Astrocyte of the cerebellum (primary cell): ENCODE measurements at regions of chr3 and their contacts with region 1.

Region 1: GRCh38 chr3:64559588-64559987 is 128.2 kb downstream of the ADAMTS9 start:
- DNase-seq: no peak
- H3K4me3 ChIP-seq: no peak overlapping the region
- CTCF ChIP-seq: no peak

Region 2: DNA sequence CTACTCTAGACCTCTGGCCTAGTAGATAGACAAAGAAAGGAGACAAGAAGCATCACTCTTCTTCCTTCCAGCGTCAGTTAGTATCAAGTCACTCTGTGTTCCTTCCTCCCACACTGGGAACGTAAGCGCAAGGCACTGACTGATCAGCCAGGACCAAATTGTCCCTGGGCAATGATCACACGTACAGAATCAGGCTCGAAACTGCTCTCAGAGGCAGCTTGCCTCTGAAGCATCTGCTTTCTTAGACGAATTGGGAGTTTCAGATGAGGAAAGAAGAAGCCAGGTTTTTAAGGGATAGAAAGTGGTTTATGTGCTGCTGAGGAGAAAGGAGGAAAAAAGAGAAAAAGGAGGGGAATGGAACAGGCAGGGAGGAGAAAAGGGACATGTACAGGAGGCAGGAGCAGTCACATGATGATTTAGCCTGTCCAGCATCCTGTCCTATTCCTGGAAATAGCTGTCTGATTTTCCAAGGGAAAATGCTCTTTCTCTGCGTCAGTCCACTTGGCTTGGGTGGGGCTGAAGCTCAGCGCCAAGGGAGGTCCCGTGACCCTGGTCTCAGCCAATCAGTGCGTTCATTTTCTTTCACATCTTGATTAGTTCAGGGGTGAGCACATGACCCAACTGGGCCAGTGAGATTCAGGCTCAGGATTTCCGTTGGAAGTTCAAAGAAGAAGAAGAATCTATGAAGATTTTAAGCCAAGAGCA is 232.3 kb before region 1 on chr3:
- in situ Hi-C with region 1: no loop called
- DNase-seq: no peak
- H3K4me3 ChIP-seq: no peak overlapping the region
- CTCF ChIP-seq: no peak

Region 3: DNA sequence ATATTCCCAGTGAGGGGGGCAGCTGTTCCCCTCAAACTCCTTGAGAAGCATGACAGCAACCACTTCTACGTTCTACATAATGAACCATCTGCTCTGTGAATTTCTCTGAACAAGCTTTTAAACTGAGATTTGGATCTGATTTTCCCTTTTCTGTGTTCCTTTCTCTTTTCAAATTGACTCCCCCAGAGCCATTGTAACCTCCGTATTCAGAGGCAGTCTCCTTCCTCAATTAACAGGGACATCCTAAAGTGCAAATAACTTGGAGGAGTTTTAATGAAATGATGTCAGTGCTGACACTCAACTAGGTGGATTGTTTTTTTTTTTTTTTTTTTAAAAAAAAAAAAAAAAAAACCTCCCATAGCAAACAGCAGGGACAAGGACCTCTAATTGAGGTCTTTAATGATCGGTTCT is 79.4 kb after region 1 on chr3:
- in situ Hi-C with region 1: loop called (anchors 5 kb)
- DNase-seq: no peak
- H3K4me3 ChIP-seq: no peak overlapping the region
- CTCF ChIP-seq: no peak

Region 4: DNA sequence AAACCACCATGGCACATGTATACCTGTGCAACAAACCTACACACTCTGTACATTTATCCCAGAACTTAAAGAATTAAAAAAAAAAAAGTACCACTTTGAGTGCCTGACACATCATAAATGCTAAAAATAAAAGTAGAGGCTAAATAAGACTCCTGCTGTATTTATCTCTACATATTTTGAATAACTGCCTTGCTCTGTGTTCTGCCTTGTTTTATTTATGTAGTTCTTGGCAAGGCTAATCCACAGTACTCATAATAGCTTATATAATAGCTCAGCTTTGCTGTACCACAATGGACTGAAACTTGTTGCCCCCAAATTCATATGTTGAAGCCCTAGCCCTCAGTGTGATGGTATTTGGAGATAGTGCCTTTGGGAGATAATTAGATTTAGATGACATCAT is 223.6 kb after region 1 on chr3:
- in situ Hi-C with region 1: no loop called
- DNase-seq: no peak
- H3K4me3 ChIP-seq: no peak overlapping the region
- CTCF ChIP-seq: no peak